ENCODE measurements at regions of chr12 and their contacts with region 1.

Region 1: DNA sequence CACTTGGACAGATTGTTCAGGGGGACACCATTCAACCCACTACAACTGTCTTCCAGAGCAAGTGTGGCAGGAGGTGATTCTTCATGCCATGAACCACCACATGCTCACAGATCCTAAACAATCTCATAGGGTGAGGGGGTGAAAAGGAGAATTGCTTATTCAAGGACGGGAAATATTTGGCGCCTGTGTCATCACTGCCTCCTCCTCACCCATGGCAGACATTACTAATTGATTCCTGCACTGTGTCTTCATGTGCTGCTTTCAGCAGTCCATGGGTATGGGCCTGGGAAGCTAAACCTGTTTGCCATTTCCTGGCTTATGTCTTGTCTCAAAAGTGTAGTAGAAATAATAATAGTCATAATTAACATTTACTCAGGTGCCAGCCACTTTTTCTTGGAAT is 31.3 kb downstream of the MMAB start:
- DNase-seq: no peak
- H3K4me3 ChIP-seq: no peak overlapping the region
- H3K27ac ChIP-seq: no peak overlapping the region
- H3K4me1 ChIP-seq: no peaks in the 10 kb centered on the region
- H3K27me3 ChIP-seq: no peaks in the 10 kb centered on the region
- CTCF ChIP-seq: no peak
- EP300 ChIP-seq: no peak
- POLR2A ChIP-seq: no peak
- RAD21 ChIP-seq: no peak

Region 2: DNA sequence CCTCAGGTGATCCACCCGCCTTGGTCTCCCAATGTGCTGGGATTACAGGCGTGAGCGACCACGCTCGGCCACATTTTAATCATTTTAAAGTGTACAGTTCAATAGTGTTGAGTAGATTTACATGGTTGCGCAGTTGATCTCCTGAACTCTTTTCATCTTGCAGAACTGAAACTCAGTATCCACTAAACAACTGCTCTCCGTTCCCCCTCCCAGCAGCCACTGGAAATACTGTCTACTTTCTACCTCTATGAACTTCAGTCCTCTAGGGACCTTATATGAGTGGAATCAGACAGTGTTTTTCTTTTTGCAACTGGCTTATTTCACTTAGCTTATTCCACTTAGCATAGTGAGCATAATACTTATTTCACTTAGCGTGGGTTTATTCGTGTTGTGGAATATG is 118.6 kb before region 1 on chr12:
- CTCF ChIA-PET with region 1: no interaction called
- POLR2A ChIA-PET with region 1: no interaction called
- DNase-seq: no peak
- H3K4me3 ChIP-seq: no peak overlapping the region
- H3K27ac ChIP-seq: no peak overlapping the region
- H3K4me1 ChIP-seq: no peaks in the 10 kb centered on the region
- H3K27me3 ChIP-seq: no peaks in the 10 kb centered on the region
- CTCF ChIP-seq: no peak
- EP300 ChIP-seq: no peak
- POLR2A ChIP-seq: no peak
- RAD21 ChIP-seq: no peak

Region 3: GRCh38 chr12:109529691-109530640 is 12.0 kb before region 1 on chr12:
- CTCF ChIA-PET with region 1: interaction called, 10 read pairs
- POLR2A ChIA-PET with region 1: interaction called, 7 read pairs
- DNase-seq: no peak
- H3K4me3 ChIP-seq: no peak overlapping the region
- H3K27ac ChIP-seq: no peak overlapping the region
- H3K4me1 ChIP-seq: peaks cover 0 to 6% (median 2%) of the 10 kb centered on the region in 4 experiments; a peak in 4 of 7 replicates
- H3K27me3 ChIP-seq: no peaks in the 10 kb centered on the region
- CTCF ChIP-seq: no peak
- EP300 ChIP-seq: no peak
- POLR2A ChIP-seq: no peak
- RAD21 ChIP-seq: no peak

Measured in H1 (cell line).